ENCODE measurements at regions of chr3 and their contacts with region 1.

Region 1: DNA sequence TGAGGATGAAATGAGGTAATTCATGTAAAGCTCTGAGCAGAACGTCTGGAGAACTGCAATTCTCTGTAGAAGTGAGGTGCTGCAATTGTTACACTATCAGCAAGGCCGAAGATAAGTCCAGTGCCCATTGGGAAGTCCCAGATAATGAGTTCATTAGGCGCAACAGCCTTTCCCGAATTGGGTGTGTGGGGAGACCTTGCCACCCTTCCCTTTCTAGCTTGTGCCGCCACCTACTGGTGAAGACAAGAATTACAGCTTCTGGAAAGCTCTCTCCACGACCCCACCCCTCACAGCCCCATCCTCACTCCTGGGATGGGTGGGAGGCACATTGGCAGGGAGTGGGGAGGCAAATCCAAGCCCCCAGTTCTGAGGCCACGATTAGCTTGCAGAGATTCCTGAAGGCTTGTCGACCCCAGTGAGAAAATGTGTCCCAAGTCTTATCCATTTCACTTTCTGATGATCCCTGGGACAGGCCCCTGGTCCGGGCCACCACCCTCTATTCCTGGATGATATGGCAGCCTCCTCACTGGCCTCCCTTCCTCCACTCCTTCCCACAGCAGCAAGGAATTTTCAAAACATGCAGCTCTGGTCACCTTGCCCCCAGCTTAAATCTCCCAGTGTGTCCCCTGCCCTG is 36.4 kb downstream of the FAM3D start:
- DNase-seq: peak; percentile 54 to 71 (median 70)
- ATAC-seq: peak; percentile 37 to 66
- H3K4me3 ChIP-seq: no peak overlapping the region
- H3K27ac ChIP-seq: no peak overlapping the region
- H3K4me1 ChIP-seq: peaks cover 21% of the 10 kb centered on the region
- H3K27me3 ChIP-seq: no peaks in the 10 kb centered on the region

Region 2: GRCh38 chr3:58568572-58569286 is 61.5 kb before region 1 on chr3:
- intact Hi-C with region 1: loop called (anchors 2 kb)
- DNase-seq: peak; percentile 72 to 92 (median 88)
- ATAC-seq: peak; percentile 56 to 65
- H3K4me3 ChIP-seq: no peak overlapping the region
- H3K27ac ChIP-seq: no peak overlapping the region
- H3K4me1 ChIP-seq: no peaks in the 10 kb centered on the region
- H3K27me3 ChIP-seq: no peaks in the 10 kb centered on the region

Region 3: GRCh38 chr3:58577269-58577821 is 52.8 kb before region 1 on chr3 and contains the start of gene FAM107A:
- intact Hi-C with region 1: loop called in 1 of 4 experiments (anchors 2 kb)
- DNase-seq: peak; percentile 70 to 89 (median 74)
- ATAC-seq: peak; percentile 84 to 88
- H3K4me3 ChIP-seq: peak within 1 kb of the TSS; percentile 63
- H3K27ac ChIP-seq: peak within 1 kb of the TSS; percentile 97
- H3K4me1 ChIP-seq: peaks cover 21% of the 10 kb centered on the region
- H3K27me3 ChIP-seq: no peaks in the 10 kb centered on the region
- total RNA-seq, gene FAM107A: 38.0 to 80.8 (median 58.0) TPM

Region 4: DNA sequence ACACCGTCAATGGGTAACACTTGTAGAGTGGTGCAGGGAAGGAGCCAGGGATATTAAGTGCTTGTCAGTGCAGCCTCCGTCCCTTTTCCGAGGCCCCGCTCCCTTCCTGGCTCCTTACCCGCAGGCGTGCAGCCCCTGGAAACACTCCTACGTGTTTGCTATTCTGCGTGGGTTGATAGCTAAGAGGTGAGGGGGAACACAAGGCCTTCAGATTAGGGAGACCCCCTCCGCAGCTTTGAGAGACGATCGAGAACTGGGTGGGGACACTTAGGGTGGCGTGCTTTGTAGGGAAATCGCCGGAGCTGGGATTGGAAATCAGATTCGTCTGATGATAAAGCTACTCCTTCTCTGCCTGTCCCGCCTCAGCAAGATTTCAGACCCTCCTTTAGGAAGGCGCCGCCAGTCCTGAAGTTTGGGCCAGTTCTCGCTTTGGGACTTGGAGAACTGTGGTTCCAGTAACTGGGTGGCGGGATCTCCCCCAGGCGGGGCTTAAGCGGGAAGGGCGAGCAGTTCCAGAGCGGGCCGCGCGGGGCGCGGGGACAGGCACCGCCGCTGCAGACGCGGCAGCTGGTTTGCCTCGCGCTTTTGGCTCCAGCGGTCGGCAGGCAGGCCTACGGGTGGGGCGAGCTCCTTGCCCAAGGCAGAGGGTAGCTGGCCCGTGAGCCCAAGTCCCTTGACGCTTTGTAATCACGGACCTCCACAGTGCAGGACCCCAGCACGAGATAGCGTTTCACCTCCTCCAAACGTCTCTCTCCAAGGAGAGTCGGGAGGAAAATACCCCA is 45.0 kb before region 1 on chr3:
- intact Hi-C with region 1: loop called in 1 of 4 experiments (anchors 5 kb)
- DNase-seq: peak; percentile 93 to 97 (median 95)
- ATAC-seq: peak; percentile 97
- H3K4me3 ChIP-seq: peak overlapping the region; percentile 77
- H3K27ac ChIP-seq: peak overlapping the region; percentile 98
- H3K4me1 ChIP-seq: no peaks in the 10 kb centered on the region
- H3K27me3 ChIP-seq: no peaks in the 10 kb centered on the region

Region 5: DNA sequence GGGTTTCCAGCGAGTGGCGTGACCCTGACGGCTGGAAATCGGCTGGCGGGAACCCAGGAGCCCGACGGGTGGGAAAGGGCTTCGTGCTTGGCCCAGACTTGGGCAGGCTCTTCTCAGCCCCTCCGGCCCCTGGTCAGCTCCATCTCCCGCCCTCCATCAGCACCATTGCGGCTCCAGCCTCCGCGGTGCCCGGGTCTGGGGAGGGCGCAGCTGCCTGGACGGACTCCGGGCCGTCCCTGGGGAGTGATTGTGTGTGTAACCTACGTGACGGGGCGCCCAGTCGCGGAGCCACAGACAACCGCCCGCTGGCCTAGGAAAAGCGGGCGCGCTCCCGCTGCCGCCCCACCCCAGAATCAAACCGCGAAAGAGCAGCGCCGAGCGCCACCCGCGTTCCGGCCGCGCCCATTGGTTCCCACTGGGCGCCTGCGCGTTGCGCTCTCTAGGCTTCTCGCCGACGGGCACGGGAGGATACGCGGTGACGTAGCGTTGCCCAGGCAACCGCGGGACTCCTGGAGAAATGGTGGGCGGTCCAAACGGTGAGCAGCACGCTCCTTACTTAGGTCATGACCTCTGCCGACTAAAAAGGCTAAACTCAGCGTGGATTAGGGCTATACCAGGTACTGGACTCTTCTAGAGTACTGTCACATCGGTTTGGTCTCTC is 419.6 kb after region 1 on chr3 and contains the start of gene CFAP20DC:
- intact Hi-C with region 1: loop called in 1 of 4 experiments (anchors 10 kb)
- DNase-seq: peak; percentile 97 to 98 (median 97)
- ATAC-seq: peak; percentile 99 to 100
- H3K4me3 ChIP-seq: peak within 1 kb of the TSS; percentile 65
- H3K27ac ChIP-seq: no peak within 1 kb of the TSS
- H3K4me1 ChIP-seq: no peaks in the 10 kb centered on the region
- H3K27me3 ChIP-seq: no peaks in the 10 kb centered on the region
- total RNA-seq, gene CFAP20DC: 0.14 to 0.28 (median 0.21) TPM in 3 of 4 donors, not detected in the other